ENCODE measurements at regions of chr10 and their contacts with region 1.

Region 1: GRCh38 chr10:102225646-102226541 is at the start of gene ELOVL3:
- DNase-seq: peak; percentile 80 to 87 (median 81)
- H3K4me3 ChIP-seq: peak within 1 kb of the TSS; percentile 51
- H3K4me3 Mint-ChIP-seq: peak within 1 kb of the TSS; percentile 12 to 82 (median 74)
- H3K27ac ChIP-seq: no peak within 1 kb of the TSS
- H3K27ac Mint-ChIP-seq: peak within 1 kb of the TSS in 3 of 8 donors; percentile 14 to 47 (median 41)
- H3K4me1 ChIP-seq: peaks cover 14% of the 10 kb centered on the region
- H3K4me1 Mint-ChIP-seq: peaks cover 15 to 24% (median 19%) of the 10 kb centered on the region in 3 donors
- H3K27me3 ChIP-seq: peaks cover 30% of the 10 kb centered on the region
- H3K27me3 Mint-ChIP-seq: peaks cover 20 to 51% of the 10 kb centered on the region in 2 donors
- total RNA-seq, gene ELOVL3: not detected

Region 2: DNA sequence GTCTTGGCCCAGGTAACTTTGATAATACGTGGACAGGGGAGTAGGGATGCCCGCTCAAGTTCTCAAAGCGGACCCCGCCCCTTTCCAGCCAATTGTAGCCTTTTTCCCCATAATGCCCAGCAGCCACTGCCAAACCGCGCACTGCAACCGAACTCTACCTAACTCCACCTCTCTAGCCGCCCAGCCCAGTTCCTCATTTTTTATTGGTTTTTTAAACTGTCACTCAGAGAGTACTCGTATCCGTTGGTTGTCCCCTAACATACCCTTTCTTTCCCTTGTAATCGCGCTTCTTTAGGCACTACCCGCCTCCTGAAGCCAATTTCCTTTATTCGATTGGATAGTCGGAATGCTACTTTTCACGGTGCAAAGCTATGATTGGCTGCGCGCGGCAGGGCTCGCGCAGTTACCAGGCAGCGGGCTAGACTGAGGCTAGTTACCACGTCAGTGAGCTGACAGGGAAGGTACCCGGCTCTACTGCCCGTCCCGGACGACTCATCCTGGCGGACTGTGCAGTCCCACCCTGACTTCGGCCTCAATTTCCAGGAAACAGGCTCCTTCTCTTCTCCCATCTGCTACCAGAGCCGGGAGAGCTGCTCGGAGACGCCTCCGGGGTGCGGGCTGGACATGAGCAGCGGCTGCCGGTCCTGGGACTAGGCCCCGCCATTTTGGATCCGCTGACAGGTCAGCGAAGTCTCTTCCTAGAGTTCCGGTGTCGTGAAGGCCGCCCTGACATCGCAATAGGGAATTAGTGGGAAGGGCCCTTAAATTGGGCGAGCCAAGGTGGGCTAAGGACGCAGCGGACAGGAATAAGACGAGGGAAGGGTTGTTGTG is 19.4 kb after region 1 on chr10 and contains the start of gene GBF1:
- CTCF ChIA-PET with region 1: interaction called, 50 read pairs
- POLR2A ChIA-PET with region 1: interaction called, 13 read pairs
- DNase-seq: peak; percentile 80 to 96 (median 93)
- H3K4me3 ChIP-seq: peak within 1 kb of the TSS; percentile 97
- H3K4me3 Mint-ChIP-seq: peak within 1 kb of the TSS; percentile 87 to 99 (median 98)
- H3K27ac ChIP-seq: peak within 1 kb of the TSS; percentile 92
- H3K27ac Mint-ChIP-seq: peak within 1 kb of the TSS; percentile 84 to 100 (median 97)
- H3K4me1 ChIP-seq: peaks cover 55% of the 10 kb centered on the region
- H3K4me1 Mint-ChIP-seq: peaks cover 57 to 69% (median 69%) of the 10 kb centered on the region in 3 donors
- H3K27me3 ChIP-seq: peaks cover 18% of the 10 kb centered on the region
- H3K27me3 Mint-ChIP-seq: peaks cover 12 to 20% of the 10 kb centered on the region in 2 donors
- total RNA-seq, gene GBF1: 38.7 to 39.2 TPM

Region 3: DNA sequence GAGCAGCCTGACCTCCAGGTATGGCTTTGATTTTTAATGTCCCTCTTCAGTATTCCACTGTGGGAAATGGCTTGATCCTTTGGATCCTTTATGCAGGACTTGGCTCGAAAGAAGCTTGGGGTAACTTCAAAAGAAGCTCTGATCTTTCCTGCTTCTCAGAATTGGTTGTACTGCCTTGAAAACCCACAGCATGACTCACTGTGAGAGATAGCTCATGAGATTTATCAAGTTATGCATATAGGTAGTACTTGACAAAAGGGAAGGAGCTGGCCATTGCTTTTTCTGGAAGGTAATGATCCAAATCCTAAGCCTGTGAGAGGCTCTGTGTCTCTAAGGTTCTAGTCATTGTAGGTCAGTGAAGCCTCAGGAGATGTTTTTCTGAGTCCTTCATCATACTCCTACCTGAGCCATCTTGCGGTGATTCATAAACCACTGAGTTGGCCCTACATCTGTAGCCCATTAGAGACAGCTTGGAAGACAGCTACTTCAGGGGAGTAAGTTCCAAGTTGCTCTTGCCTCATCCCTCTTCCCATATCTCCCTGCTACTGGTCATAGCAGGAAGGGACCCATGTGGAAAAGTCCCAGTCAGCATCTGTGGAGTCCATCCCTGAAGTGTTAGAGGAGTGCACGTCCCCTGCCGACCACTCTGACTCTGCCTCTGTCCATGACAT is 133.0 kb after region 1 on chr10:
- CTCF ChIA-PET with region 1: interaction called, 327 read pairs
- POLR2A ChIA-PET with region 1: no interaction called
- DNase-seq: no peak
- H3K4me3 ChIP-seq: no peak overlapping the region
- H3K4me3 Mint-ChIP-seq: no peak overlapping the region
- H3K27ac ChIP-seq: no peak overlapping the region
- H3K27ac Mint-ChIP-seq: no peak overlapping the region
- H3K4me1 ChIP-seq: no peaks in the 10 kb centered on the region
- H3K4me1 Mint-ChIP-seq: peaks cover 0 to 2% (median 0%) of the 10 kb centered on the region in 3 donors
- H3K27me3 ChIP-seq: no peaks in the 10 kb centered on the region
- H3K27me3 Mint-ChIP-seq: no peaks in the 10 kb centered on the region

Region 4: GRCh38 chr10:102394079-102394800 is 168.3 kb after region 1 on chr10:
- CTCF ChIA-PET with region 1: interaction called, 64 read pairs
- POLR2A ChIA-PET with region 1: interaction called, 12 read pairs
- DNase-seq: peak; percentile 97 to 100 (median 99)
- H3K4me3 ChIP-seq: peak overlapping the region; percentile 100
- H3K4me3 Mint-ChIP-seq: peak overlapping the region; percentile 89 to 97 (median 96)
- H3K27ac ChIP-seq: peak overlapping the region; percentile 100
- H3K27ac Mint-ChIP-seq: peak overlapping the region; percentile 98 to 100 (median 100)
- H3K4me1 ChIP-seq: peaks cover 29% of the 10 kb centered on the region
- H3K4me1 Mint-ChIP-seq: peaks cover 31 to 44% (median 32%) of the 10 kb centered on the region in 3 donors
- H3K27me3 ChIP-seq: no peaks in the 10 kb centered on the region
- H3K27me3 Mint-ChIP-seq: peaks cover 0 to 8% of the 10 kb centered on the region in 2 donors

Region 5: GRCh38 chr10:102484021-102484420 is 258.1 kb after region 1 on chr10:
- CTCF ChIA-PET with region 1: interaction called, 27 read pairs
- POLR2A ChIA-PET with region 1: no interaction called
- DNase-seq: no peak
- H3K4me3 ChIP-seq: no peak overlapping the region
- H3K4me3 Mint-ChIP-seq: no peak overlapping the region
- H3K27ac ChIP-seq: no peak overlapping the region
- H3K27ac Mint-ChIP-seq: peak overlapping the region in 1 of 8 donors; percentile 21
- H3K4me1 ChIP-seq: no peaks in the 10 kb centered on the region
- H3K4me1 Mint-ChIP-seq: peaks cover 1 to 2% (median 1%) of the 10 kb centered on the region in 3 donors
- H3K27me3 ChIP-seq: no peaks in the 10 kb centered on the region
- H3K27me3 Mint-ChIP-seq: no peaks in the 10 kb centered on the region

Measured in CD8-positive, alpha-beta memory T cell (primary cell).